Activated naive CD4-positive, alpha-beta T cell treated with anti-CD3 and anti-CD28 coated beads for 36 hours (primary cell): ENCODE measurements at regions of chr22 and their contacts with region 1.

Region 1: DNA sequence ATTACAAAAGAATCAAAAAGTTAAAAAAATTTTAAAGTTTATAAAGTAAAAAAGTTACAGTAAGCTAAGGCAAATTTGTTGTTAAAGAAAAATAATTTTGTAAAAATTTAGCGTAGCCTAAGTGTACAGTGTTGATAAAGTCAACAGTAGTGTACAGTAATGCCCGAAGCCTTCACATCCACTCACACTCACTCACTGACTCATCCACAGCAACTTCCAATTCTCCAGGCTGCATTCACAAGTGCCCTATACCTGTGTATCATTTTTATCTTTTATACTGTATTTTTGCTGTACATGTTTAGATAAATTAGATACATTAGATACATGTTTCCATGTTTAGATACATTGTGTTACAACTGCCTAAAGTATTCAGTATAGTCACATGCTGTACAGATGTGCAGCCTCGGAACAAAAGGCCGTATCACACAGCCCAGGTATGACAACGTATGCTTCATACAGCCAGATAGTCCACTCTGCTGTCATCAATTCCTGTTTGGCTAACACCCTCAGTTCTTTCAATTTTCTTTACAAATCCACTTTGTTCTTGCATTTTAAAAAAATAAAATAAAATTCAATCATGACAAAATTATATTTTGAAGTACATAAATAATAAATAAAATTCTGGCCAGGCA is 80.7 kb downstream of the RBFOX2 start:
- DNase-seq: no peak
- H3K4me3 Mint-ChIP-seq: no peak overlapping the region
- H3K27ac Mint-ChIP-seq: no peak overlapping the region
- H3K4me1 Mint-ChIP-seq: no peaks in the 10 kb centered on the region
- H3K27me3 Mint-ChIP-seq: peaks cover 3% of the 10 kb centered on the region

Region 2: GRCh38 chr22:35684270-35684700 is 263.6 kb before region 1 on chr22:
- CTCF ChIA-PET with region 1: no interaction called
- intact Hi-C with region 1: no loop called
- DNase-seq: no peak
- H3K4me3 Mint-ChIP-seq: no peak overlapping the region
- H3K27ac Mint-ChIP-seq: no peak overlapping the region
- H3K4me1 Mint-ChIP-seq: peaks cover 15% of the 10 kb centered on the region
- H3K27me3 Mint-ChIP-seq: no peaks in the 10 kb centered on the region

Region 3: DNA sequence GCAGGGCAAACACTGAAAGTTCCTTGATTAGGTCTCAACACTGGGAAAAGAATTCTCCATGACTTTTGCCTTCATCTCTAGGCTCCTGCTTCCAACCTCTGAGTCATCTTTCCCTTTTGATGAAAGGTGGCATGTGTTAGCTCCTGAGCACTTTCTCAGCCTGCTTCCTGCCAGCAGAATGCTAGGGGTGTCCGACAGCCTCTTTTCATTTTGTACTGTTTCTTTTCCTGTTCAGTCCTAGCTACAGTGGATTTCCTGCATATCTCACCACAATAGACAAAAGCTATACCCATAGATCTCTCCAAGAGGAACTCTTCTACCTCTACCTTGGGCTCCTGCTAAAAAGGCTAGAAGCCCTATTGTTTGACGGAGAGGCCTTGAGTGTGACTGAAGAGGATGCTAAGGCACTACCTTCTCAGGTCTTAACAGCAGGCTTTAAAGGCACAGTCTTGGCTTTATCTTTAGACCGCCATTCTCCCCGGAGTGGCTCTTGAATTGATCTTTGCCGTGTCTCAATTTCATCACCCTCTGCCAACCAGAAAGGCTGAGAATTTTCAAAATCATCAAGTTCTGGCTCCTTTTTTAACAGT is 64.8 kb before region 1 on chr22:
- CTCF ChIA-PET with region 1: no interaction called
- intact Hi-C with region 1: no loop called
- DNase-seq: peak; percentile 13
- H3K4me3 Mint-ChIP-seq: no peak overlapping the region
- H3K27ac Mint-ChIP-seq: no peak overlapping the region
- H3K4me1 Mint-ChIP-seq: peaks cover 23% of the 10 kb centered on the region
- H3K27me3 Mint-ChIP-seq: no peaks in the 10 kb centered on the region

Region 4: DNA sequence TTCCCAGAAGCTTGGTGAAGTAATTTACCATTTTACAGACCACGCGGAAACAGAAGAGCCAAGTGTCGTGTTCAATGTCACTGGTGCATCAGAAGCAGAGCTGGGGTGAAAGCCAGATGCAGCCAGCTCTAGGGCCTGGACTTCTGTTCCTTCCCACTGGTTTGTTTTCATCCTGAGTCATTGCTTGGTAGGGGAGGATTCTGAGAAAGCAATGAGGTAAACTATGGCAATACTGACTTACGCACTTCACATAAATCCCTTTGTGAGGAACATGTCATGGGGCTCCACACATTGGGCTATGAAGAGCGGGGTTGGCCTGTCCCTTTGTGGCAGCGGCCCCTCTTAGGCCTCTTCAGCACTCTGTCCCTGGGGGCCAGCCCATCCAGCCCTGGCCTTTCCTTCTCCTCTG is 133.1 kb after region 1 on chr22:
- CTCF ChIA-PET with region 1: interaction called, 10 read pairs
- intact Hi-C with region 1: no loop called
- DNase-seq: no peak
- H3K4me3 Mint-ChIP-seq: no peak overlapping the region
- H3K27ac Mint-ChIP-seq: no peak overlapping the region
- H3K4me1 Mint-ChIP-seq: no peaks in the 10 kb centered on the region
- H3K27me3 Mint-ChIP-seq: no peaks in the 10 kb centered on the region